Calu3 (cell line): ENCODE measurements at regions of chr1 and their contacts with region 1.

Region 1: DNA sequence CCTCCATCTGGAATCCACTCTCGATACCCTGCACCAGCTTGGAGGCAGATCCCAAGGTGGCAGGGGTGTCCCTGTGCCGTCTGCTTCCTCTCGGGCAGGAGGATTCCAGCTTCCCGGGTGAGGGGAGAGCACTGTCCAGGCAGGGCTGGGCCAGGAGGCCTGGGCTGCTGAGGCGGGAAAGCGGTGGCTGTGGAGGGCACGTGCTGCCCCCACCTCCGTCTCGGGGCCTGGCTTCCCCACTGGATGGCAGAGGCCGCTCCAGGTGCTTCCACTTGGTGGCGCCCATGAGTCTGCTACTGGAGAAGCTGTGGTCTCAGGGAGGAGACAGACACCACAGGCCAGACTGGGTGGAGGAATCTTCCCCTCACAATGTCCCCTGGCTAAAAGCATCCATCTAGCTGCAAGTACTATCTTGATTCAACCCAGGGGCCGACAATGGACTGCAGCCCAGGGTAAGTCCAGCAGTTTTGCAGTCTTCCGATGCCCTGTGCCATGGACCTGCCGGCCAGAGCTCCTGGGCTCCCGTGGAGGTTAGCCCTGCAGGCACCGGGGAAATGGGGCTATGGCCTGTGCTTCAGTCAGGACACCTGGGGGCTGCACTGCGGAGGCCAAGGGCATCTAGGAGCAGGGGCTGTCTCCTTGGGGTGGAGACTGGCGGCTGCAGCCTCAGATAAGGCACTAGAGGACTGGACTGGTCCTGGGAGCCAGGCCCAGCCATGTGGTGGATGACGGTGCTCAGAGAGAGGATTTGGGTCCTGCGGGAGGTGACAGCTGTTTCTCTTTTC is 41.3 kb upstream of the EIF4G3 start:
- DNase-seq: peak; percentile 28
- H3K4me3 Mint-ChIP-seq: no peak overlapping the region
- H3K27ac Mint-ChIP-seq: no peak overlapping the region
- H3K4me1 Mint-ChIP-seq: no peaks in the 10 kb centered on the region
- H3K27me3 Mint-ChIP-seq: no peaks in the 10 kb centered on the region
- CTCF ChIP-seq: no peak

Region 2: DNA sequence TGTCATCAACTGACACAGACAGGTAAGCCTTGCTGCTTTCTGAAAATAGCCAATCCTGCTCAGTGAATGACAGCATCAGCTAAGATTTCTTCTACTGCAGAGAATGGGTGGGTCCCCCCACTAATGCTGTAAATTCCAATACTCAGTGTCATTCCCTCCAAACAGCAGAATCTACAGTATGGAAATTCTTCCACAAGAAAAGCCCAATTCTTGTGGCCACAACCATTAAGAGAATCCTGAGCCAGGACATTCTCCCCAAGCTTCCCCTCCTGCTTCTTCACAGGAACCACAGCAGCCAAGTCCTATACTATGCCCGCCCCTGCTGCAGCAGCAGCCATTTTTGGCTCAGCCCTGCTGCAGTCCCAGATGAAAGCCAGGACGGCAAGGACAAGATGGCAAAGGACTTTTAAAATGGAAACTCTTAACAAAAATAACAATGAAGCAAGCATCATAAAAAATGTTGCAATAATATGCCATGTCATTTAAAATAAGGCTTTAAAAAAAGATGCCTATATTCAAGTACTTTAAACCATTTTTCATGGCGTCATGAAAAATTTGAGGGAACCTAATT is 68.1 kb before region 1 on chr1:
- CTCF ChIA-PET with region 1: no interaction called
- intact Hi-C with region 1: no loop called
- DNase-seq: no peak
- H3K4me3 Mint-ChIP-seq: no peak overlapping the region
- H3K27ac Mint-ChIP-seq: peak overlapping the region; percentile 7
- H3K4me1 Mint-ChIP-seq: peaks cover 10% of the 10 kb centered on the region
- H3K27me3 Mint-ChIP-seq: no peaks in the 10 kb centered on the region
- CTCF ChIP-seq: no peak

Region 3: GRCh38 chr1:21385022-21385421 is 167.0 kb after region 1 on chr1:
- CTCF ChIA-PET with region 1: interaction called, 10 read pairs
- intact Hi-C with region 1: no loop called
- DNase-seq: no peak
- H3K4me3 Mint-ChIP-seq: no peak overlapping the region
- H3K27ac Mint-ChIP-seq: no peak overlapping the region
- H3K4me1 Mint-ChIP-seq: peaks cover 15% of the 10 kb centered on the region
- H3K27me3 Mint-ChIP-seq: no peaks in the 10 kb centered on the region
- CTCF ChIP-seq: no peak